ENCODE measurements at regions of chr2 and their contacts with region 1.

Region 1: DNA sequence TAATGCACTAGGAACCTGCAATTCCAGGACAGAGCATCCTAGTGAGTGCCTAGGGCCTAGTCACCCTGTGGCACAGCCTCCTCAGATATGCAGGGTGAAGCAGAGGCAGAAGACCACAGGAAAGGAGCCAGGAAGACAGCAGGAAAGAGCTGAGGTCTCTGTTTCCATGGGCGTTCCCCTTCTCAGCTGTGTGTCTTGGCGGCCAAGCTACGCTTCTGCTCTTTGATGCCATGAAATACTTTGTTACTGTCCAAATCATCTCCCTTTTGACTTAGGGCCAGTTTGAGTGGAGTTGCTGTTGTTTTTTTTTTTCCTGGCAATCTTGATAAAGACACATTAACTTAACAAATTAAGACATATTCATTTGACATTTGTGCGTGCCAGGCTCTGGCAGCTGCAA is 67.3 kb downstream of the APOB start:
- DNase-seq: no peak
- H3K4me3 ChIP-seq: no peak overlapping the region
- H3K27ac ChIP-seq: peak overlapping the region; percentile 63 to 71
- H3K4me1 ChIP-seq: peaks cover 9 to 46% of the 10 kb centered on the region in 2 donors
- H3K27me3 ChIP-seq: no peaks in the 10 kb centered on the region
- CTCF ChIP-seq: no peak

Region 2: GRCh38 chr2:20822535-20823490 is 153.7 kb before region 1 on chr2 and contains the start of gene LDAH:
- intact Hi-C with region 1: no loop called
- DNase-seq: peak; percentile 66 to 95
- H3K4me3 ChIP-seq: peak within 1 kb of the TSS; percentile 92 to 97
- H3K27ac ChIP-seq: peak within 1 kb of the TSS; percentile 96 to 97
- H3K4me1 ChIP-seq: peaks cover 0 to 3% of the 10 kb centered on the region in 2 donors
- H3K27me3 ChIP-seq: no peaks in the 10 kb centered on the region
- CTCF ChIP-seq: no peak
- total RNA-seq, gene LDAH: 15.6 TPM

Region 3: DNA sequence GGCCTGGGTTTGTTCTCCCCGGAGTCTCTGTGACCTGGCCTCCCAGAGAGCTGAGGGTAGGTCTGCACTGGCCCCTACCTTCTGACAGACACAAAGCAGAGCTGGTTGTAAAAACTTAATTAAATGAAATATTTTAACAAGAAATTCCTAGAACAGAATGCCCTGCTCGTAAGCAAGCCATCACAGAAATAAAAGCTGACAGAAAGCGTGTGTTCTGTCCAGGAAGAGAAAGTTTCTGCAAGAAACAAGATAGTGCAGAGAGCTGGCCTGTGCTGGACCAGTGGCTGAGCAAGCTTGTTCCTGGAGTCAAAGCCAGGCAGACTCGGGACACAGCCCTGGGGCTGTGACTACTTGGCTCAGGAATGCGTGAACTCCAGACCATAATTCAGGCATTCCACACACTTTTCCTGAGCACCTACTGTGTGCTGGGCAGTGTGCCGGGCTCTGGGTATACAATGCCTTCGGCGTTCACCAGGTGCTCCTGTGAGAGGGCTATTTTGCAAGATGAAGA is 15.7 kb after region 1 on chr2:
- intact Hi-C with region 1: loop called (anchors 1 kb)
- DNase-seq: peak; percentile 49 to 83
- H3K4me3 ChIP-seq: no peak overlapping the region
- H3K27ac ChIP-seq: peak overlapping the region; percentile 84 to 86
- H3K4me1 ChIP-seq: peaks cover 8 to 26% of the 10 kb centered on the region in 2 donors
- H3K27me3 ChIP-seq: no peaks in the 10 kb centered on the region
- CTCF ChIP-seq: no peak

Measured in ascending aorta (tissue), 2 donors.